ENCODE measurements at regions of chr9 and their contacts with region 1.

Region 1: DNA sequence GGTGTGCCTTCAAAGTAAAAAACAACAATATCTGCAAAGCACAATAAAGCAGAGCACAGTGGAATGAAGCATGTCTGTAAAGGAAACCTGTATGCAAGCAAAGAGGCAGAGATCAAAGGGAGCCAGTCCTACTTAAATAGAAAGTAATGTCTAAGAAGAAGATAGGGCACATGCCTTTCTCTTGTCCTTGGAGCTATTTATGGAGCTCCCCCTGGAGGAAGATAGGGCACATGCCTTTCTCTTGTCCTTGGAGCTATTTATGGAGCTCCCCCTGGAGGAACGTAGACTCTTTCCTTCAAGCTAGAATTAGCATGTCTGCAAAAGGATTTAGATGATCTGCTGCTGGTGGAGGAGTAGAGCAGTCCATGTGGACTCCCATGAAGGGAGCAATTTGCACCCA is 168.1 kb upstream of the RASEF start:
- DNase-seq: no peak
- H3K4me3 ChIP-seq: no peak overlapping the region
- H3K27ac ChIP-seq: no peak overlapping the region
- H3K4me1 ChIP-seq: no peaks in the 10 kb centered on the region
- H3K27me3 ChIP-seq: no peaks in the 10 kb centered on the region
- CTCF ChIP-seq: peak; percentile 61

Region 2: GRCh38 chr9:83166369-83166768 is 64.7 kb before region 1 on chr9:
- CTCF ChIA-PET with region 1: no interaction called
- dilution Hi-C with region 1: no loop called
- in situ Hi-C with region 1: no loop called
- intact Hi-C with region 1: loop called (anchors 1 kb)
- DNase-seq: peak; percentile 35
- H3K4me3 ChIP-seq: no peak overlapping the region
- H3K27ac ChIP-seq: no peak overlapping the region
- H3K4me1 ChIP-seq: peaks cover 14% of the 10 kb centered on the region
- H3K27me3 ChIP-seq: no peaks in the 10 kb centered on the region
- CTCF ChIP-seq: no peak

Region 3: DNA sequence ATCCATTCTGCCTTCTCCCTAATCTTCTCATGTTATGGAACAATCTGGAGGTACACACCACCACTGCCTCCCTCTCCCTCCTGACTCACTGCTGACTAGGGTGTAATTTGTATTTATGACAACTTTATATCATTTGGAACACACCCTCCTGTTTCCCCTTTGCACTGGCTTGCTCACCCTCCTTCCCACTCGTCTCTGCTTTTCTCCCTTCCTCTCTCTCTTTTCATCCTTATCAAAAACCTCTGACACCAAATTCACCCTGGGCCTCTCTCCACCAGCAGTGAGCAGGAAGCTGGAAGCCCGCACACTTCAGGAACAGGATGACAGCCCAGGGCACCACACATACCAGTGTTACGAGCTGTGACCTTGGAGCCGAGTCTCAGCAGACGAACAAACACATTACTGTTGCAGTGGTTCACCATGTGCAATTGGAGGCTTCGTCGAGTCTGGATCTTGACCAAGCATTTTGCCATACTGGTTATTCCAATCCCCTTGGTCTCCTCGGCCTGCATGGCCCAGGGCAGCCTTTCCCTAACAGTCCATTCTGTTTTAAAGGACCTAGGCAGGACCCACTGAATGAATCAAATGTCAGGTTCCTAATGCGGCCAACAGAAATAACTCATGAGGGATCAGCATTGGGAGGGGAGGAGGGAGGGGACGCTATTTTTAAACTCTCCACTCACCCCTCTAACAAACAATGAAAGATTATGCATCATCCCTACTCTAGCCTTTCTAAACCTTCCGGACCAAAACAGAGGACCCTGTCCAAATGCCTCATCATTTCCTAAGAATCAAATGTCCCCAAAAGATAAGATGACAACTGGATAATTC is 35.8 kb after region 1 on chr9:
- CTCF ChIA-PET with region 1: no interaction called
- dilution Hi-C with region 1: no loop called
- in situ Hi-C with region 1: no loop called
- intact Hi-C with region 1: no loop called
- DNase-seq: no peak
- H3K4me3 ChIP-seq: no peak overlapping the region
- H3K27ac ChIP-seq: no peak overlapping the region
- H3K4me1 ChIP-seq: no peaks in the 10 kb centered on the region
- H3K27me3 ChIP-seq: peaks cover 3% of the 10 kb centered on the region
- CTCF ChIP-seq: no peak

Measured in mammary epithelial cell (primary cell).